Dendritic cell treated with granulocyte-macrophage colony-stimulating factor and Interleukin-4, amounts not matched to agents 40 ng/mL and 50 ng/mL, for 4 days (primary cell): ENCODE measurements at regions of chr4 and their contacts with region 1.

Region 1: GRCh38 chr4:88211473-88212252 is 53.2 kb upstream of the ABCG2 start:
- H3K4me3 Mint-ChIP-seq: no peak overlapping the region
- H3K27ac Mint-ChIP-seq: no peak overlapping the region
- H3K4me1 Mint-ChIP-seq: peaks cover 5% of the 10 kb centered on the region
- H3K27me3 Mint-ChIP-seq: peaks cover 4% of the 10 kb centered on the region

Region 2: DNA sequence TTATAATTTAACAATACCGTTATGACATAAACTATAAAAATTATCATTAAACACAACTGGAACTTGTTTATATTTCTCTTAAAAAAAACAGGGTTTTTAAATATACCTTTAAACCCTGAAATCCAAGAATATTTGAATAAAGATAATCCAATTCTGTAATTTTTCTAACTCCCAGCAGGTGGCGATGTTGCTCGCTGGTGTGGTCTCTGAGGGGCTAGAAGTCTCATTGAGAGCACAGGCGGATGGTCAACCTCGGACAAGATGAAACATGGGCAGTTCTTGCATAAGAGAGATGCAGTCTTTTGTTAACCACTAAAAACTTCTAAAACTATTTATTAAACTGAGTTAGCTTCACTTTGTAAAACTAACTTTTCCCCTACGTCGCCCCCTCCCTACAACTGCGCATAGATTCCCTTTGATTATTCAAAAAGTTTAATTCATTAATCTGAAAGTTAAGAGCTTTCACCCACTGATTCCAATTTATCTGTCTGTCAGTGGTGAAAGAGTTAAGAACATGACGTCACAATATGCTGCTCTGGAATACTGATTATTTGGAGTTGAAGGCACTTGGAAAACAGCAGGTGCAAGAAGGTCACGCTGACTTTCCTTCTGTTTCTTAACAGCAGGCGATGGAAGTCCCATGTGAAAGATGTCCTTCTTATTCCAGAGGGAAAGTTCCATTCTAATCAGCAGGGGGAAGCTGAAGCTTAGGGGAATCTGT is 532.1 kb before region 1 on chr4:
- intact Hi-C with region 1: loop called (anchors 2 kb)
- H3K4me3 Mint-ChIP-seq: no peak overlapping the region
- H3K27ac Mint-ChIP-seq: no peak overlapping the region
- H3K4me1 Mint-ChIP-seq: no peaks in the 10 kb centered on the region
- H3K27me3 Mint-ChIP-seq: no peaks in the 10 kb centered on the region

Region 3: DNA sequence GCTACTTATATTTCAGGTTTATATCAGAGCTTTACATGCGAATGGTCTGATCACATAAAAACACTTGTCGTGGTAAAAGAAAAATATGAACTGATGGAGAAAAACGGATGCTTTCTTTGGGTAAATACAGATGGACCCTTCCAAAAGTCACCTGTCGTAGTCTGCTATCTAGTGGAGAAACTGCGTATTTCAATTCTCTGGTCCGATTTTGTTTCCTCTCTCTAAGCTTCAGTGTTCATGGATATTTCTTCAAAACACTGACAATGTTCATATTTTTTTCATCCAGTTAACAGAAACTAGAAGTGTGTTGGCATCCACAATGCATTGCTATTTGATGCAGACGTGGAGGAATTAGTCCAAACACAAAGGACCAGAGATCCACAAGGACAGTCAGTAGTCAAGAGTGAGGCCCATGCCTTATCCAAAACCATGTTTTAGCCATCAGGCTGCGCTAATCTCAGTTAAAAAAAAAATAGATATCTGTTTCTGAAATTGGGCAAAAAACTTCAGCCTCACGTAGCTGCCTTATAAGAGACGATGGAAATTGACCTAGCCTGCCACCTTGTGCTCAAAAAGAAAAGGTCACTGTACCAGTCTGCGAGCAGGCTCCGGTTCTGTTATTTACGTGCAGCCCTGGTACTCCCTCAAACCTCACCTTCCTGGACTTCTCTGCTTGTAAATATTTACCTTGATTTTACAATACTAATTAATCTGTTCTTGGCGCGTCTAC is 362.9 kb before region 1 on chr4:
- intact Hi-C with region 1: loop called (anchors 5 kb)
- H3K4me3 Mint-ChIP-seq: no peak overlapping the region
- H3K27ac Mint-ChIP-seq: no peak overlapping the region
- H3K4me1 Mint-ChIP-seq: peaks cover 50% of the 10 kb centered on the region
- H3K27me3 Mint-ChIP-seq: peaks cover 7% of the 10 kb centered on the region

Region 4: DNA sequence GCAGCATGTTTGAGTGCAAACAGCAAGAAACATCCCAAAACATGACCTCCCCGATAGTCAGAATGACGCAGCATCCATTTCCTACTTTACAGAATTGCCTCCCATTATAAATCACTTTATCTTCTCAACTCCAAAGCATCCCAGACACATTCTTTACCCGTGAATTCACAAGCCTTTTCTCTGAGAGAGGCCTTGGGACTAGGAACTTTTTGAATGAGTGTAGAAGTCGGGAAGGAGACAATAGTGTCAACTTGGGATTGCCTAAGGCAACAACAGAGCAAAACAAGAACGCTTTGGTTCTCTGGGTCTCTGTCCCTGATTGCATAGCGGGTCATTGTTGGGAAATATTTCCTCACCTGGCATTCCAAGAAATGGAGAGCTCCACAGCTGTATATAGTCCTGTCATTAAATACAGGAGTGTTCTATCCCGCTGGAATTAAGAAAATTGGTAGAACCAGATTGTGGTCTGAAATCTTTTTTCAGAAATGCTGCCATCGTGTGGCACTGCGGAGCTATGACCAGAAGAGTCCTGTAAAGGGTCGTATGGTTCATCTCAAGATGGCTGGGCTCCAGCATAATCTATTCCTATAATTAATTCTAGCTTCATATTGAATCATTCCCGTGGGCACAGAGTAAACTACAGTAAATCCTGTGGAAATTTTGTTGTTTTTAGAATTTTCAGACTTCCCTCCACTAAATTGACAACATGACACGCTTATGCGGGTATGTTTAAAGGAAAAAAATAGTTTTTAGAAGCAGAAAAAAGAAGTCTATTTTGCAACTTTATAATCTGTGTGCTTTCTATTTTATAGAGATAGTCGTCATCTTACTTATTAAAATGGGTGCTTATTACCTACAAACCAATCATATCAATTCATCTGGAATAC is 238.1 kb before region 1 on chr4:
- intact Hi-C with region 1: loop called (anchors 5 kb)
- H3K4me3 Mint-ChIP-seq: no peak overlapping the region
- H3K27ac Mint-ChIP-seq: no peak overlapping the region
- H3K4me1 Mint-ChIP-seq: peaks cover 7% of the 10 kb centered on the region
- H3K27me3 Mint-ChIP-seq: peaks cover 24% of the 10 kb centered on the region

Region 5: DNA sequence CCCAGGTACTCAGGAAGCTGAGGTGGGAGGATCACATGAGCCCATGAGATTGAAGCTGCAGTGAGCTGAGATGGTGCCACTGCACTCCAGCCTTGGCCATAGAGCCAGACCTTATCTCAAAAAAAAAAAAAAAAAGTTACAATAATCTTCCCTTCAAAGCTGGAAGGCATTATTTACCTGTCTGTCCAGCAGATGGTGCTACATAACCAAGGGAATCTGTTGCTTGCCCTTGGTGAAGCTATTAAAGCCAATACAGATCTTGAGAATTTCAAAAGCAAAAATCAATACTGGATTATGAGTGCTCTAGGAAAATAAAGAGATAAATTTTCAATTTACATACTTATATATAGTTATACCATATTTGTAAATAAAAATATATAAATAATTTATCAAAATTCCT is 178.4 kb before region 1 on chr4:
- intact Hi-C with region 1: loop called (anchors 2 kb)
- H3K4me3 Mint-ChIP-seq: no peak overlapping the region
- H3K27ac Mint-ChIP-seq: no peak overlapping the region
- H3K4me1 Mint-ChIP-seq: peaks cover 35% of the 10 kb centered on the region
- H3K27me3 Mint-ChIP-seq: no peaks in the 10 kb centered on the region

Region 6: GRCh38 chr4:88054901-88055300 is 156.8 kb before region 1 on chr4:
- intact Hi-C with region 1: loop called (anchors 1 kb)
- H3K4me3 Mint-ChIP-seq: no peak overlapping the region
- H3K27ac Mint-ChIP-seq: no peak overlapping the region
- H3K4me1 Mint-ChIP-seq: no peaks in the 10 kb centered on the region
- H3K27me3 Mint-ChIP-seq: no peaks in the 10 kb centered on the region

Region 7: GRCh38 chr4:88366460-88366859 is 154.8 kb after region 1 on chr4:
- intact Hi-C with region 1: loop called (anchors 5 kb)
- H3K4me3 Mint-ChIP-seq: no peak overlapping the region
- H3K27ac Mint-ChIP-seq: no peak overlapping the region
- H3K4me1 Mint-ChIP-seq: peaks cover 6% of the 10 kb centered on the region
- H3K27me3 Mint-ChIP-seq: no peaks in the 10 kb centered on the region